ENCODE measurements at regions of chr5 and their contacts with region 1.

Region 1: GRCh38 chr5:59039296-59040023 is 456.6 kb downstream of the RAB3C start:
- DNase-seq: peak; percentile 87 to 94
- ATAC-seq: peak; percentile 68 to 86 (median 77)
- H3K4me3 ChIP-seq: peak overlapping the region; percentile 98
- H3K4me3 Mint-ChIP-seq: peak overlapping the region; percentile 98
- H3K27ac ChIP-seq: peak overlapping the region; percentile 96
- H3K27ac Mint-ChIP-seq: peak overlapping the region; percentile 94 to 98
- H3K4me1 ChIP-seq: peaks cover 7% of the 10 kb centered on the region
- H3K4me1 Mint-ChIP-seq: peaks cover 69 to 71% of the 10 kb centered on the region in 2 donors
- H3K27me3 ChIP-seq: no peaks in the 10 kb centered on the region
- H3K27me3 Mint-ChIP-seq: no peaks in the 10 kb centered on the region
- CTCF ChIP-seq: no peak

Region 2: DNA sequence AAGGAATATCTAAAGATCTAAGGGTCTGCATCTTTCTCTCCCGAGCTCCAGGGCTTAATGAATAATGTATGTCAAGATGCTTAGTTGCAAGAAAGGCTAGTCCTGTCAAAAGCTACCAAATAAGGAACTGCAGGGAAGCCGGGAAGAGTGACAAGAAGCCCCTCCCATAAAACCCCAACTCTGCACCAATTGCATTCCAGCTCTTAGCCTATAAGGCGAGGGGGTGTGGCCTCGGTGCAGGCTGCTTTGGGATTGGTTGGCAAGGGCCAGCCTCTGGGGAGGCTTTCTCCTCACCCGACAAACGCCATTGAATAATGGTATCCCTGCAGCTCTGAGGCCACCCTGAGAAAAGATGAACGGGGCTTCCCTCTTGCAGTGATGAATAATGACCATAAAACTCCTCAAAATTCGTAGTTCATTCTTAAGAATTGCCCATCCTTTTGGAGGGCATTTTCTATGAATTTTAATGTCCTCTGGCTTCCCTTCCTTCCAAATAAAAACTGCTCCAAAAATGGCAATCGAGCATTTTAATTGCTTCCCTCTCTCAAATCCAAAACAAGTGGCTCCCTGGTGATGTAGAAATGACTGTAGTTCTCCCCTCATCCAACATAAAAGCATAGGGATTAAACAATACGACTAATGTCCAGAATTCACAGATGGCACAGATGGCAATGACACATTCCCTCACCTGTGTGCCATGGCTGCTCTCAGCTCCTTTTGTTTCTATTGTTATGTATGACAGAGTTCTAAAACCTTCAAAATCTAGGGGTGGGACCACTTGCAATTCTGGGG is 39.5 kb before region 1 on chr5:
- intact Hi-C with region 1: loop called (anchors 5 kb)
- DNase-seq: no peak
- ATAC-seq: no peak
- H3K4me3 ChIP-seq: no peak overlapping the region
- H3K4me3 Mint-ChIP-seq: no peak overlapping the region
- H3K27ac ChIP-seq: no peak overlapping the region
- H3K27ac Mint-ChIP-seq: peak overlapping the region in 1 of 2 donors; percentile 11
- H3K4me1 ChIP-seq: no peaks in the 10 kb centered on the region
- H3K4me1 Mint-ChIP-seq: peaks cover 59 to 63% of the 10 kb centered on the region in 2 donors
- H3K27me3 ChIP-seq: no peaks in the 10 kb centered on the region
- H3K27me3 Mint-ChIP-seq: no peaks in the 10 kb centered on the region
- CTCF ChIP-seq: no peak

Region 3: GRCh38 chr5:59099270-59099994 is 60.0 kb after region 1 on chr5:
- intact Hi-C with region 1: loop called (anchors 1 kb)
- DNase-seq: peak; percentile 42 to 84
- ATAC-seq: peak; percentile 88 to 97 (median 96)
- H3K4me3 ChIP-seq: no peak overlapping the region
- H3K4me3 Mint-ChIP-seq: peak overlapping the region; percentile 63
- H3K27ac ChIP-seq: peak overlapping the region; percentile 86
- H3K27ac Mint-ChIP-seq: peak overlapping the region; percentile 88 to 94
- H3K4me1 ChIP-seq: peaks cover 16% of the 10 kb centered on the region
- H3K4me1 Mint-ChIP-seq: peaks cover 43 to 46% of the 10 kb centered on the region in 2 donors
- H3K27me3 ChIP-seq: no peaks in the 10 kb centered on the region
- H3K27me3 Mint-ChIP-seq: no peaks in the 10 kb centered on the region
- CTCF ChIP-seq: no peak

Region 4: DNA sequence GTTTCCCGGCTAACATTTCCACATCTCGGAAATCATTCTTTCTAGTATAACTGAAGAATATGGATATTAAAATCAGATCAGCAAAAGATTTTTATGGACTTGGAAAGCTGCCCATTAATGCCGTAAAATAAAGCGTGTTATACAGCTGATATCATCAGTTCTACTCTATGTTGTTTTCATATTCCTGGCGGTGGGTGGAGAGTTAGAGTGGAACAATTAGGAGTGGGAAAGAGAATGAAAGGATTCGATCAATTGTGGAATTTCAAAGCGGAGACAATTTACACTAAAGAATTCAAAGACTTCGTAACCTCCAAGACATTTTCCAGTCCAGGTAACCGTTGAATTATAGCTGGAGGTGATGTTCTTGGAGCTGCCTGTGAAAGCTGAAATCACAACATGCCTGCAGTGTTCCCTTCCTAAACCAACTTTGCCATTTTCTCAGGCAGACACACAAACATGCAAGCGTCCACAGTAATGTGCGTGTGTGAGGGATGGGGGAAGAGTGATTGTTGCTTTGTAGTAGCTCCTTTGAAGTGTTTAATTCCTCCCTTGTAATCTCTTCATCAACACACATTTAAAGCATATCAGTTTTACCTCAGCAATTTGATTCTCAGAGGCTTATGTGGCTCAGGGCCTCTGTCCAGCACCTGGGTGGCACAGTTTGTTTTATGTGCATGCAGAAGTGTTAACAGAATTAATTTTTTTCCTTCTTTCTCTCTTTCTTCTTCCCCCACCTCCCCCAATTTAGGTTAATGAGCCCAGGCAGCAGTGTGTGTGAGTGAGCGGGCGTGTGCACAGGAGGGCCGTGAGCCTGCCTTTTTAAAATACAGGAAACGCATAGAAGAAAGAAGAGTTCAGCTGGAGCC is 87.5 kb after region 1 on chr5:
- intact Hi-C with region 1: loop called (anchors 1 kb)
- DNase-seq: peak in 1 of 2 donors; percentile 76
- ATAC-seq: no peak
- H3K4me3 ChIP-seq: peak overlapping the region; percentile 17
- H3K4me3 Mint-ChIP-seq: no peak overlapping the region
- H3K27ac ChIP-seq: peak overlapping the region; percentile 80
- H3K27ac Mint-ChIP-seq: no peak overlapping the region
- H3K4me1 ChIP-seq: peaks cover 26% of the 10 kb centered on the region
- H3K4me1 Mint-ChIP-seq: peaks cover 0 to 5% of the 10 kb centered on the region in 2 donors
- H3K27me3 ChIP-seq: no peaks in the 10 kb centered on the region
- H3K27me3 Mint-ChIP-seq: no peaks in the 10 kb centered on the region
- CTCF ChIP-seq: no peak

Region 5: DNA sequence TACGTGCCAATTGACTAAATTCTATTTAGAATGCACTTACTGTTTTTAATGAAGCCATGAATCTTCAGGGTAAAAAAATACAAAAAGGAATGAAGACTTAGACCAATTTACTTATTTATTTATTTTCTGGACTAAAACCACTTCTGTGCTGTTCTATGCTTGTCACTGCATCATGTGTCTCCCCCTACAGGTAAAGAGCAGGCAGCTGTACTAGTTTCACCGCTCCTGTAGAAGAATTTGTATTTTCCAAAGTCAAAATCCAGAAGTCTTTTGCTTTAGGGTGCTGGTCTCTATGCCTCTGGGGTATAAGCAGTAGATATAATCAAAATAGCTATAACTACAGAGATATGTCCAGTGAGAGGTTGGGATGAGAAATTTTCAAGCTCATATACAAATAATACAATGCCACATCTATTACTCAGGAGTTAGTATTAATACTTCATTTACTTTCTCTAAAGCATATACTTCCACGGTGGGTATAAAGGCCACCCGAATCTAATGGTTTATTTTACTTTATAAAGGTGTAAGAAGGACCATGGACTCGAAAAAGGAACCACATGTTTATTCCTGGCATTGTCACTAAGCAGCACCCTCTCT is 134.9 kb after region 1 on chr5:
- intact Hi-C with region 1: loop called (anchors 1 kb)
- DNase-seq: peak in 1 of 2 donors; percentile 81
- ATAC-seq: peak; percentile 86 to 93 (median 93)
- H3K4me3 ChIP-seq: no peak overlapping the region
- H3K4me3 Mint-ChIP-seq: no peak overlapping the region
- H3K27ac ChIP-seq: no peak overlapping the region
- H3K27ac Mint-ChIP-seq: peak overlapping the region in 1 of 2 donors; percentile 50
- H3K4me1 ChIP-seq: no peaks in the 10 kb centered on the region
- H3K4me1 Mint-ChIP-seq: peaks cover 4 to 14% of the 10 kb centered on the region in 2 donors
- H3K27me3 ChIP-seq: no peaks in the 10 kb centered on the region
- H3K27me3 Mint-ChIP-seq: no peaks in the 10 kb centered on the region
- CTCF ChIP-seq: peak; percentile 90

Region 6: GRCh38 chr5:59356813-59357380 is 317.4 kb after region 1 on chr5:
- intact Hi-C with region 1: loop called (anchors 2 kb)
- DNase-seq: peak; percentile 19 to 52
- ATAC-seq: peak; percentile 68 to 82 (median 74)
- H3K4me3 ChIP-seq: no peak overlapping the region
- H3K4me3 Mint-ChIP-seq: peak overlapping the region; percentile 85
- H3K27ac ChIP-seq: peak overlapping the region; percentile 93
- H3K27ac Mint-ChIP-seq: peak overlapping the region; percentile 95
- H3K4me1 ChIP-seq: peaks cover 15% of the 10 kb centered on the region
- H3K4me1 Mint-ChIP-seq: peaks cover 54% of the 10 kb centered on the region in 2 donors
- H3K27me3 ChIP-seq: no peaks in the 10 kb centered on the region
- H3K27me3 Mint-ChIP-seq: no peaks in the 10 kb centered on the region
- CTCF ChIP-seq: no peak

Measured in natural killer cell (primary cell).